ENCODE measurements at regions of chr6 and their contacts with region 1.

Region 1: DNA sequence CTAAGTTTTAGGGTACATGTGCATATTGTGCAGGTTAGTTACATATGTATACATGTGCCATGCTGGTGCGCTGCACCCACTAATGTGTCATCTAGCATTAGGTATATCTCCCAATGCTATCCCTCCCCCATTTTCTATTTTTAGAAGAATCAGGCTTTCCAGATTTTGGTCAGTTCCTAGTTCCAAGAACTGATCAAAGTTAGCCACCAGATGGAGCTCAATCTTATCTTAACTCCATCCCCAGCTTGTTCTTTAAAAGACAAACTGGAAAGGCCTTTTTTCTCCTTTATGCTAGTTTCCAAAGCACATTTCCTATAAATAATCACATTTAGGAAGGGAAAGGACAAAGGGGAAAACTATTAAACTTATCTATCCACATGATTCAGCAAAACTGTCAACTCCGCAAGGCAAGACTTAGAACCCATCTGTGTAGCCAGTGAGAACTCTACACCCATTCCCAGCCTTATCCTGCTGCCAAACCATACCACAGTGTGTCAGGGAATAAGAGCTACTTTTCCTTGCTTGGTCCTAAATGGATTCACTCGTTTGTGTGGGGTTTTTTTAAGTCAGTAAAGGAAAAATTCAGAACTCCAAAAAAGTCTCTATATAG is 22.8 kb upstream of the KHDC1 start:
- H3K4me3 ChIP-seq: no peak overlapping the region
- H3K27ac ChIP-seq: no peak overlapping the region
- H3K4me1 ChIP-seq: no peaks in the 10 kb centered on the region
- CTCF ChIP-seq: no peak

Region 2: DNA sequence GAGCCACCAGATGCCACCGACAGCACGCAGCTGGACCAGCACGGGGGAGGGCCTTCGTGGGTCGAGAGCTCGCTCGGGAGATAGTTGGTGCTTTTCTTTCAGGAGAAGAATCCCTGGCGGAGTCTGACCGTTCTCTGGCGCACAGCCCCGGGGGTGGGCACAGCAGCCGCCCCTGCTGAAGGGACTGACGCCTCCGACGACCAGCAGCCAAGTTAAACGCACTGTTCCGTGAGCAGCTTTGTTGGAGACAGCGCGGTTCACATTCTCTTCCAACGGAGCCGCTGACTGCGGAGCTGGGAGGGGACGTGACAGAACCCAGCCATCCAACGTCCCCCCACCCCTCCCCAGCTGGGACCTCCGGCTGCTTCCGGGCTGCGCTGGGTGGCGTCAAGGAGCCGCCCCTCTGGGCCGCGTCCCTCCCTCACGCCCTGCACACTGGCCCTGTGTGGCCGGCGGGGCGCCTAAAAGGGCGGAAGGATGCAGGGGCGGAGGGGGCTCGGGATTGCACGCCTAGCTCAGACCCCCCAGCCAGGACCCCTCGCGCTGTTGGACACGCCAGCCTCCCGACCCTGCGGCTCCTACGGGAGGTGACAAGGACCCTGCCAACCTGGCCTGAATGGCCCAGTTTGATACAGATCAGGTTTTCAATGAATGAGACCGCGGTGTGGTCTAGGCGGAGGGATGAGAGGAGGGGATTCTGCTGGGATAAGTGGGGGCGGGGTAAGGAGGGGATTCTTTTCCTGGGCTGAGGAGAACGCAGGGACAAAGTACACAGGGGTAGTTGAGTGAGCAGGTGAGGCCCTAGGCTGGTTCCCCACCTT is 13.6 kb after region 1 on chr6:
- CTCF ChIA-PET with region 1: interaction called, 16 read pairs
- POLR2A ChIA-PET with region 1: no interaction called
- H3K4me3 ChIP-seq: no peak overlapping the region
- H3K27ac ChIP-seq: no peak overlapping the region
- H3K4me1 ChIP-seq: no peaks in the 10 kb centered on the region
- CTCF ChIP-seq: no peak

Region 3: DNA sequence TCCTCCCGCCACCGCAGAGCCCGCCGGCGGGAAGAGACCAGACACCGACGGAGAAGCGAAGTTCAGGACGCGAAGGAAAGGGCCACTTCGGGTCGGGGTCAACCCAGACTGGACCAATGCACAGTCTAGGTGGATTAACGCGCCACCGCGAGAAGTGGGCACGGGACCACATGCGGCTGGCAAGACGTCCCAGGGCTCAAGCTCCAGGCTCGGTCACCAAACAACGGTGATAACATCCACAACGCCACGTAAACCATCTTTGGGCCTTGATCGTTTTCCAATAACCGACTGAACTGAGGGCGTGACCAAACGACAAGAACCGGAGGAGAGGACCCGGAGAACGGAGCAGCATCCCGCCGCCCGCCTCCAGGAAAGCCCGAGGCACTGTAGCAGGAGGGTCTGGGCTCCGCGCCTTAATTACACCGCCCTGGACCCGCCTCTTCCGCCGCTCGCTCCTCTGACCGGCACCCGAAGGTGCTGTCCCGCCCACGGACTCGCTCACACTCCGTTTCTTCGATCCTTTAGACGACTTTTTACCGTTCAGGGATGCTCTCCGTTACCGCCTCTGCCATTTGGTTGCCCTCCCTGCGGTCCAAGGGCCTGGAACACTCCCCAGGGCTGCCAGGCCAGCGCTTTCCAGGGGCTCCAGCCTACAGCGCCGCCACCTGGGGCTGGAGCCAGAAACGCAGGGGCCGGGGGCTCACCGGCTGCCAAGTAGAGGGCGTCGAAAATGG is 24.2 kb after region 1 on chr6:
- CTCF ChIA-PET with region 1: interaction called, 16 read pairs
- POLR2A ChIA-PET with region 1: interaction called, 6 read pairs
- H3K4me3 ChIP-seq: peak overlapping the region; percentile 53
- H3K27ac ChIP-seq: peak overlapping the region; percentile 78
- H3K4me1 ChIP-seq: no peaks in the 10 kb centered on the region
- CTCF ChIP-seq: peak; percentile 96

Region 4: DNA sequence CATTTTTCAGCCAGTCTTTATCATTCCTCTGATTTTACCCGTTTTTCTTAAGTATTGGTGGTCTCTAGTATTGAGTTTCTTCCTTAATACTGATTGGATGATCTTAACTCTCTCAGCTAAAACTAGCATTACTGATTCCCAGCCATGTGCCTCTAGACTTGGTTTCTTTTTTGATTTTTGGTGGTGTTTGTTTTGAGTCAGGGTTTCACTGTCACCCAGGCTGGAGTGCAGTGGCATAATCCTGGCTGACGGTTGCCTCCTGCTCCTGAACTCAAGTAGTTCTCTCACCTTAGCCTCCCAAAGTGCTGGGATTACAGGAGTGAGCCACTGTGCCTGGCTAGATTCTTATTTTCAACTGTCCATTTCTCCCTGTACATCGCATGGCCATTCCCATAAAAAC is 43.4 kb after region 1 on chr6:
- CTCF ChIA-PET with region 1: interaction called, 44 read pairs
- POLR2A ChIA-PET with region 1: no interaction called
- H3K4me3 ChIP-seq: no peak overlapping the region
- H3K27ac ChIP-seq: no peak overlapping the region
- H3K4me1 ChIP-seq: no peaks in the 10 kb centered on the region
- CTCF ChIP-seq: no peak

Region 5: DNA sequence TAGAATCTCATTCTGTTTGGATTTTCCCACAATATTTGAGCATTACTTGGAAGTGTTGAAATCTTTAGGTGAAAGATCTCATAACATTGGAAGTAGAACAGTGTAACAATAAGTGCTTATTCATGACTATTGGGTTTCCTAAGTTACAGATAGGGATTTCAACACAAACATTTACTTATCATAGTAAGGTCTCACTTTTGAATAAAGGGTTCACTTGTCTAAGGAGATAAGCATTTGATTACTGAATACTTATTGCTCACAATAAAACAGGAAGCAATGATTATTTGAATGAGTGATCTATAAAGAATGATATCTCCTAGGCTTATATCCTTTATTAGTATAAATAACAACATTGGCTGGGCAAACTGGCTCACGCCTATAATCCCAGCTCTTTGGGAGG is 123.6 kb after region 1 on chr6:
- CTCF ChIA-PET with region 1: no interaction called
- POLR2A ChIA-PET with region 1: no interaction called
- H3K4me3 ChIP-seq: no peak overlapping the region
- H3K27ac ChIP-seq: no peak overlapping the region
- H3K4me1 ChIP-seq: no peaks in the 10 kb centered on the region
- CTCF ChIP-seq: no peak

Measured in HEK293 (cell line).